Natural killer cell (primary cell): ENCODE measurements at regions of chr14 and their contacts with region 1.

Region 1: DNA sequence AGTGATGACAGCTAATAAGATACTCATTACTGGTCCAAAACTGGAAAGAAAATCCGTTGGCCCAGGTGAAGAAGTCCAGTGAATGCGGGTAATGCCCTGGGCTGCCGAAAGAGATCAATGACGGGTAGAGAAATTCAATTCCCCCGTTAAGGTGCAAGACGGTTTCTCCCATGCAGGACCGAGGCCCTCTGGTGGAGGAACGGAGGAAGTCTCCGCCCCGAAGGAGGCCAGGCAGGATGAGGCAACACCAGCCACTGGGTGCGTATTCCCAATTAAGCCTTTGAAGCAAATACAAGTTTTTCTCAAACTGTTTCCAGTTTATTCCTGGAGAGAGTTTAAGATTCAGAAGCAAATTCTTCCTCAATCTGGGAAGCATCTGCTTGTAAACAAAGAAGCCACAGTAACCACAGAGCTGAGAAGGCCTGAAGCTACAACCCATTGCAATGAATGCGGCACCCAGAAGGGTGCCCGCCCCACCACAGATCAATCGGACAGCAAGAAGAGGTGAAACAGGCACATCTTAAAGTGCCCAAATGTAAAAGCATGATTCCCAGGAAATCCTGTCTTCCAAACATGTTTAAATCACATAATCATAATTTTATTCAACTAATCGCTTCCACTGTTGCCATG is 118.5 kb downstream of the TTC7B start:
- DNase-seq: peak; percentile 54 to 83
- ATAC-seq: peak; percentile 82 to 92 (median 84)
- H3K4me3 ChIP-seq: no peak overlapping the region
- H3K4me3 Mint-ChIP-seq: no peak overlapping the region
- H3K27ac ChIP-seq: no peak overlapping the region
- H3K27ac Mint-ChIP-seq: no peak overlapping the region
- H3K4me1 ChIP-seq: no peaks in the 10 kb centered on the region
- H3K4me1 Mint-ChIP-seq: peaks cover 0 to 4% of the 10 kb centered on the region in 2 donors
- H3K27me3 ChIP-seq: no peaks in the 10 kb centered on the region
- H3K27me3 Mint-ChIP-seq: peaks cover 4 to 5% of the 10 kb centered on the region in 2 donors
- CTCF ChIP-seq: peak; percentile 71

Region 2: DNA sequence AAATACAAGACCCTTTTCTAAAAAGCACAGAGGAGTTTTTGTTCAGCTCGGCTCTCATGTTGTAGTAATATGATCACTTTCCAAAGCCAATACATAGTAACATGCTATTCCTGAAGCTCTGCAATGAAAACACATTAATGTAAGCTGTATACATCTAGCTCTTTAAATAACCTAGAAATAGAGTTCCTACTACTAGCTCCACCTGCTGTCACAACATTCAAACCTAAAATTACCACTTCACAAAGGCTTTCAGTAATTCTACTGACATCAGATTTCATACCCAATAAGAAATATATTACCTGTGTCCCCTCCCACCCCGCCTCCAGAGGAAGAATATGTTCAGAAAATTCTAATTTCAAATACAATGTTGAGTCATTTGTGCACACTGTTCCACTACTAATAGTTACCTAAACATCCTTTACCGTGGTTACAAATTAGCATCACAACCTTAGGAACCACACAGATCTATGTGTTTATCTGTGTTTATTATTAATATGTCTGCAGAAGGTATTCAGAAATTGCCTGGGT is 761.0 kb before region 1 on chr14:
- intact Hi-C with region 1: loop called (anchors 5 kb)
- DNase-seq: no peak
- ATAC-seq: no peak
- H3K4me3 ChIP-seq: no peak overlapping the region
- H3K4me3 Mint-ChIP-seq: no peak overlapping the region
- H3K27ac ChIP-seq: no peak overlapping the region
- H3K27ac Mint-ChIP-seq: no peak overlapping the region
- H3K4me1 ChIP-seq: no peaks in the 10 kb centered on the region
- H3K4me1 Mint-ChIP-seq: no peaks in the 10 kb centered on the region
- H3K27me3 ChIP-seq: no peaks in the 10 kb centered on the region
- H3K27me3 Mint-ChIP-seq: no peaks in the 10 kb centered on the region
- CTCF ChIP-seq: no peak

Region 3: GRCh38 chr14:90288651-90289355 is 408.9 kb before region 1 on chr14:
- intact Hi-C with region 1: loop called (anchors 1 kb)
- DNase-seq: no peak
- ATAC-seq: peak; percentile 91 to 98 (median 93)
- H3K4me3 ChIP-seq: no peak overlapping the region
- H3K4me3 Mint-ChIP-seq: no peak overlapping the region
- H3K27ac ChIP-seq: no peak overlapping the region
- H3K27ac Mint-ChIP-seq: peak overlapping the region; percentile 16
- H3K4me1 ChIP-seq: no peaks in the 10 kb centered on the region
- H3K4me1 Mint-ChIP-seq: peaks cover 0 to 6% of the 10 kb centered on the region in 2 donors
- H3K27me3 ChIP-seq: no peaks in the 10 kb centered on the region
- H3K27me3 Mint-ChIP-seq: no peaks in the 10 kb centered on the region
- CTCF ChIP-seq: no peak

Region 4: DNA sequence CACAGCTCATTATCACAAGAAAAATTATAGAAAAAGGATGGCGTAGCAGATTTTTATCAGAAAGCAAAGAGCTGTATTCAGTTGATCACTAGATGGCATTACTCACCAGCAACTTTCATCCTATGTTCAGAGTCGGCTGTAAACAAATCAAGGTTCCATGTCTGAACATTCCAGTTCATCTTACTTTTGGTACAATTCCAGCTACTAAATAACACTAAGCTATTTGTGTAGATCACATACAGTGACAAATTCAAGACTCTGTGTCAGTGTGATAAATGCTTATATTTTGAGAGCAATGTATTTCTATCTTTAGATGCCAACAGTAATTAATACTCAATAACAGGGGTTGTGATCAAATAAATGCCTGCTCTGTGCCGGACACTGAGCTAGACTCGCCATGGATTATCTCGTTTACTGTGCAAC is 396.0 kb before region 1 on chr14:
- intact Hi-C with region 1: loop called (anchors 1 kb)
- DNase-seq: peak in 1 of 2 donors; percentile 37
- ATAC-seq: peak in 1 of 3 donors; percentile 39
- H3K4me3 ChIP-seq: no peak overlapping the region
- H3K4me3 Mint-ChIP-seq: no peak overlapping the region
- H3K27ac ChIP-seq: no peak overlapping the region
- H3K27ac Mint-ChIP-seq: peak overlapping the region; percentile 24 to 58
- H3K4me1 ChIP-seq: no peaks in the 10 kb centered on the region
- H3K4me1 Mint-ChIP-seq: peaks cover 11 to 18% of the 10 kb centered on the region in 2 donors
- H3K27me3 ChIP-seq: no peaks in the 10 kb centered on the region
- H3K27me3 Mint-ChIP-seq: no peaks in the 10 kb centered on the region
- CTCF ChIP-seq: no peak

Region 5: GRCh38 chr14:90368946-90369721 is 328.6 kb before region 1 on chr14:
- intact Hi-C with region 1: loop called (anchors 1 kb)
- DNase-seq: peak in 1 of 2 donors; percentile 69
- ATAC-seq: peak; percentile 79 to 92 (median 88)
- H3K4me3 ChIP-seq: no peak overlapping the region
- H3K4me3 Mint-ChIP-seq: no peak overlapping the region
- H3K27ac ChIP-seq: no peak overlapping the region
- H3K27ac Mint-ChIP-seq: no peak overlapping the region
- H3K4me1 ChIP-seq: no peaks in the 10 kb centered on the region
- H3K4me1 Mint-ChIP-seq: no peaks in the 10 kb centered on the region
- H3K27me3 ChIP-seq: no peaks in the 10 kb centered on the region
- H3K27me3 Mint-ChIP-seq: peaks cover 0 to 3% of the 10 kb centered on the region in 2 donors
- CTCF ChIP-seq: peak; percentile 49

Region 6: GRCh38 chr14:90593254-90594040 is 104.2 kb before region 1 on chr14:
- intact Hi-C with region 1: no loop called
- DNase-seq: no peak
- ATAC-seq: no peak
- H3K4me3 ChIP-seq: no peak overlapping the region
- H3K4me3 Mint-ChIP-seq: no peak overlapping the region
- H3K27ac ChIP-seq: no peak overlapping the region
- H3K27ac Mint-ChIP-seq: no peak overlapping the region
- H3K4me1 ChIP-seq: no peaks in the 10 kb centered on the region
- H3K4me1 Mint-ChIP-seq: no peaks in the 10 kb centered on the region
- H3K27me3 ChIP-seq: no peaks in the 10 kb centered on the region
- H3K27me3 Mint-ChIP-seq: no peaks in the 10 kb centered on the region
- CTCF ChIP-seq: no peak